Naive thymus-derived CD4-positive, alpha-beta T cell (primary cell): ENCODE measurements at regions of chr12 and their contacts with region 1.

Region 1: DNA sequence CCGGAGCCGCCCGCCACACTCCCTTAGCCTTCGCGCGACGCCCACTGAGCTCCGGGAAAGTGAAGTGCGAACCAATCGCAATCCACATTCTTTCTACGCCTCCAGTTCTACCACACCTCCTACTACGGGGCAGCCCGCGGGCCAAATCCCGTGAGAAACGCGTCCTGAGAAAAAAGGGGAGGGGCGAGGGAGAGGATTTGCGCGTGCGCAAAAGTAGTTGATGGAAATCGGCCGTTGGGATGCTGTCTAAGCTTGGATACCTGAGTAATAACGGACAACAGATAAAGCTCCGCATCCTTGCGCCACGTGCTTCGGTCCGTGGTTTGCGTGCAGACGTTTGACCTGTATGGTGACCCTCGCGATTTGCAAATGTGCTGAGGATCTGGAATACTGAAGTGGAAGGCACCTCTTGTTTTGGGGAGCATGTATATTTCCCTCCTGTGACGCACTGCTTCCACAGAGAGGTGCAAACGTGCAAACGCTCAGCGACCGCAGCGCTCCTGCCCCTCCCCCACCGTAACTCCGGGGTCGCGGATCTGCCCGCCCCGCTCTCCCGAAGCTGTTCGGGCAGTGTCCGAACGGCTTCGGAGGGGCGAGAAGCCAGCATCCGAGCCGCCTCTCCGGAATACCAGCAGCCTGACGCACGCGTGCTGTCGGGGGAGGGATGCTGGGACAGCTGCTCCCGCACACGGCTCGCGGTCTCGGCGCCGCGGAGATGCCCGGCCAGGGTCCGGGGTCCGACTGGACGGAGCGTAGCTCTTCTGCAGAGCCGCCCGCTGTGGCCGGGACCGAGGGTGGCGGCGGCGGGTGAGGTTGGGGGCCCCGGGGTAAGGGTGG is at the starts of genes FAM216A and GPN3:
- DNase-seq: peak; percentile 83 to 98 (median 98)
- ATAC-seq: peak; percentile 94
- H3K4me3 ChIP-seq: peak within 1 kb of the TSS; percentile 95
- H3K4me3 Mint-ChIP-seq: peak within 1 kb of the TSS; percentile 90 to 100 (median 96)
- H3K27ac ChIP-seq: peak within 1 kb of the TSS; percentile 90
- H3K27ac Mint-ChIP-seq: peak within 1 kb of the TSS; percentile 88 to 98 (median 95)
- H3K4me1 ChIP-seq: peaks cover 10 to 19% of the 10 kb centered on the region in 2 donors
- H3K4me1 Mint-ChIP-seq: peaks cover 20 to 68% (median 36%) of the 10 kb centered on the region in 7 donors
- H3K27me3 ChIP-seq: no peaks in the 10 kb centered on the region
- H3K27me3 Mint-ChIP-seq: no peaks in the 10 kb centered on the region
- total RNA-seq, gene FAM216A: 5.3 to 24.1 (median 23.0) TPM
- total RNA-seq, gene GPN3: 5.1 to 19.7 (median 14.6) TPM

Region 2: DNA sequence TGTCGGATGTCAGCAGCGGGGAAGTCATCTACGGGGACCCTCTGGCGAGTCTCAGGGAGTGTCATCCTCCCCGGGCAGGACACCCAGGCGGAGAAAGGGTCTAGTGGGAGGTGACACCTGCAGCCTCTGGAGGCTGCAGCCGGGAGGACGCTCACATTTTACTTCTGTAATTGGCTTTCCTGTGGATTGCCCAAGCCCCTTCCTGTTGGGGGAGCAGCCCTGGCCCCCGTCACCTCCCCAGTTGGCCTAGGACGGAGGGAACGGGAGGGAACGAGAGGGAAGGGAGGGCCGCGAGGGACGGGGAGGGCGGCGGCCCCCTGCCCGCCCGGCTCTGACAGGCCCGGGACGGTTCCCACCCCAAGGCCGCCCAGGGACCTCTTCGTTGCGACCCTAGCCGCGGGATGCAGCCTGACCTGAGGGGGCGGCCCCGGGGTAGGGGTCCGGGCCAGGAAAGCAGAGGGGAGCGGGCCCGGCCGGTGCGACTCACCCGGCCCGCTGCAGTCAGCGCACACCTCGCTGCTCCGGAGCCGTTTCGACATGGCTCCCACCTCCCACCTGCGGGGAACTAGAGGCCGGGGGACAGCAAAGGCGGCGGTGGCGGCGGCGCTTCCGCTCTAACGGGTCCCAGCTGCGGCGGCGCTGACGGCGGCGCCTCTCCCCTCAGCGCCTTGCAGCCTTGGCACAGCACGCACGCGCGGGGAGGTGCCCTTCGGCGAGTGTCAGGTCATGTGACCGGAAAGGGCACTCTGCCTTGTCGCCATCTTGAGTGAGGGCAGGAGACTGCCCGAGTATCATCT is 472.5 kb before region 1 on chr12 and contains the start of gene GIT2:
- CTCF ChIA-PET with region 1: no interaction called
- POLR2A ChIA-PET with region 1: no interaction called
- intact Hi-C with region 1: loop called in 1 of 2 experiments (anchors 5 kb)
- DNase-seq: peak; percentile 88 to 95 (median 93)
- ATAC-seq: peak; percentile 81
- H3K4me3 ChIP-seq: peak within 1 kb of the TSS; percentile 86
- H3K4me3 Mint-ChIP-seq: peak within 1 kb of the TSS; percentile 90 to 100 (median 96)
- H3K27ac ChIP-seq: peak within 1 kb of the TSS; percentile 84
- H3K27ac Mint-ChIP-seq: peak within 1 kb of the TSS; percentile 84 to 100 (median 96)
- H3K4me1 ChIP-seq: peaks cover 22 to 33% of the 10 kb centered on the region in 2 donors
- H3K4me1 Mint-ChIP-seq: peaks cover 42 to 77% (median 66%) of the 10 kb centered on the region in 7 donors
- H3K27me3 ChIP-seq: no peaks in the 10 kb centered on the region
- H3K27me3 Mint-ChIP-seq: no peaks in the 10 kb centered on the region
- total RNA-seq, gene GIT2: 70.3 to 128 (median 109) TPM

Region 3: GRCh38 chr12:110449799-110450497 is 18.5 kb before region 1 on chr12 and contains the start of gene ARPC3:
- CTCF ChIA-PET with region 1: interaction called, 35 read pairs
- POLR2A ChIA-PET with region 1: interaction called, 88 read pairs
- intact Hi-C with region 1: loop called (anchors 1 kb)
- DNase-seq: peak; percentile 86 to 95 (median 94)
- ATAC-seq: peak; percentile 98
- H3K4me3 ChIP-seq: peak within 1 kb of the TSS; percentile 95
- H3K4me3 Mint-ChIP-seq: peak within 1 kb of the TSS; percentile 90 to 100 (median 99)
- H3K27ac ChIP-seq: peak within 1 kb of the TSS; percentile 93
- H3K27ac Mint-ChIP-seq: peak within 1 kb of the TSS; percentile 94 to 100 (median 99)
- H3K4me1 ChIP-seq: peaks cover 20 to 22% of the 10 kb centered on the region in 2 donors
- H3K4me1 Mint-ChIP-seq: peaks cover 31 to 51% (median 44%) of the 10 kb centered on the region in 7 donors
- H3K27me3 ChIP-seq: no peaks in the 10 kb centered on the region
- H3K27me3 Mint-ChIP-seq: peaks cover 0 to 3% (median 0%) of the 10 kb centered on the region in 5 donors
- total RNA-seq, gene ARPC3: 166 to 381 (median 187) TPM

Region 4: DNA sequence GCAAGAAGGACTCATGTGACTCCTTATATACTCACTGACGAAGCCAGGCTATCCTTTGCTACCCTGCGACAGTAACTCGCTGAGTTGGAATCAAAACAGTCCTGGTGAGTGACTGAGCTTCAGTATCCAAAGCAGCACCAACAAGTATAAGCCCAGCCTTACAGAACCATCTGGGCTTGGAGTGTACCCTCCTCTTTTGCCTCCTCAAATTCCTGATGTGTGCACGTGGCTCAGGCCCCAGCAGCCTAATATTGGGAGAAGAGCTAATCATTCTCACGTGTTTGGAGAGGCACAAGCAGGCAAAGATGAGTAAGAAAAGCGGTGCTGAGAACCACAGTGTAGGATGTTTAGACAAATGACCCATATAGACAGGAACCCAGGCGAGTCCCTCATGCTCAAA is 80.2 kb after region 1 on chr12:
- CTCF ChIA-PET with region 1: interaction called, 7 read pairs
- POLR2A ChIA-PET with region 1: interaction called, 3 read pairs
- intact Hi-C with region 1: loop called (anchors 1 to 5 kb)
- DNase-seq: no peak
- ATAC-seq: no peak
- H3K4me3 ChIP-seq: no peak overlapping the region
- H3K4me3 Mint-ChIP-seq: no peak overlapping the region
- H3K27ac ChIP-seq: no peak overlapping the region
- H3K27ac Mint-ChIP-seq: peak overlapping the region in 3 of 9 donors; percentile 28 to 68 (median 55)
- H3K4me1 ChIP-seq: no peaks in the 10 kb centered on the region
- H3K4me1 Mint-ChIP-seq: peaks cover 10 to 55% (median 44%) of the 10 kb centered on the region in 7 donors
- H3K27me3 ChIP-seq: no peaks in the 10 kb centered on the region
- H3K27me3 Mint-ChIP-seq: no peaks in the 10 kb centered on the region

Region 5: DNA sequence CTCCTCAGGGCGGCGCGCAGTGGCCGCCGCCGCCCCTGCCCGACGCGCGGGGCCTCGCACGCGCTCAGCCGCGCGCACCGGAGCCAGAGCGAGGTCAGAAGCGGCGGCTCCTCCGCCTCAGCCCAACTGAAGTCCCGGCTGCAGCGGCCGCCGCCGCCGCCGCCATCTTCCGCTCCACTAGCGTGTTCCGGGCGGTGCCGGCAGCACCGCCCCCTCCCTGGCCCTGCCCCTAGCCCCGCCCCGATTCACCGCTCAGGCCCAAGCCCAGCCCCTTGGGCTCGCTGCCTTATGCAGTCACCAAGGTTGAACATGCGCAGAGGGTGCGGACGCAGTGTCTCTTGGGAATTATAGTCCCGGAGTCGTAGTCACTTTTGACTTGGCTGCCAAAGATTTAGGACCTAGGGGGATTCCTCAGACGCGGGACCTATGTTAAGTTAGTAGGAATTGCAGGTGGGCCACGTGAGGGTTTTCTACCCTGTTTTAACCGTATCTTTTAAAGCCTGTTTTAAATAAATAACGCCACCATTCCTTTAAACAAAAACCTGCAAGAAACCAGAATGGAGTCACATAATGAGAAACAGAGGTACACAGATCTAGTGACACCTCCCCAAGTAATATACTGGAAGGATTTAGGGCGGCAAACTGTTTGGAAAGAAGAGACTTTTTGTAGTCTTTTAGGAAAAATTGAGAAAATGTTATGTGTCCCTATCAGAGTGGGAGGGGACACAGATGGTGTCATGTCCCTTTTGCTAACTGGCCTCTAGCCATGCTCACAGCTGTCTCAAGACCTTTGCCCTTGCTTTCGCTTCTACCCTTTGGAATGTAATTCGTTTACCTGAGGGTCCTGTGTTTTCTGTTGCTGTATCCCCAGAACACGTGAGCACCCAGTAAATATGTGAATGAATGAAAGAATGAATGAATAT is 115.0 kb after region 1 on chr12 and contains the start of gene PPTC7:
- CTCF ChIA-PET with region 1: interaction called, 4 read pairs
- POLR2A ChIA-PET with region 1: interaction called, 13 read pairs
- intact Hi-C with region 1: loop called (anchors 1 kb)
- DNase-seq: peak; percentile 84 to 97 (median 93)
- ATAC-seq: peak; percentile 98
- H3K4me3 ChIP-seq: peak within 1 kb of the TSS; percentile 72
- H3K4me3 Mint-ChIP-seq: peak within 1 kb of the TSS; percentile 91 to 97 (median 95)
- H3K27ac ChIP-seq: peak within 1 kb of the TSS; percentile 97
- H3K27ac Mint-ChIP-seq: peak within 1 kb of the TSS; percentile 93 to 97 (median 95)
- H3K4me1 ChIP-seq: peaks cover 26 to 55% of the 10 kb centered on the region in 2 donors
- H3K4me1 Mint-ChIP-seq: peaks cover 53 to 74% (median 67%) of the 10 kb centered on the region in 7 donors
- H3K27me3 ChIP-seq: no peaks in the 10 kb centered on the region
- H3K27me3 Mint-ChIP-seq: no peaks in the 10 kb centered on the region
- total RNA-seq, gene PPTC7: 36.7 to 43.8 (median 38.8) TPM

Region 6: DNA sequence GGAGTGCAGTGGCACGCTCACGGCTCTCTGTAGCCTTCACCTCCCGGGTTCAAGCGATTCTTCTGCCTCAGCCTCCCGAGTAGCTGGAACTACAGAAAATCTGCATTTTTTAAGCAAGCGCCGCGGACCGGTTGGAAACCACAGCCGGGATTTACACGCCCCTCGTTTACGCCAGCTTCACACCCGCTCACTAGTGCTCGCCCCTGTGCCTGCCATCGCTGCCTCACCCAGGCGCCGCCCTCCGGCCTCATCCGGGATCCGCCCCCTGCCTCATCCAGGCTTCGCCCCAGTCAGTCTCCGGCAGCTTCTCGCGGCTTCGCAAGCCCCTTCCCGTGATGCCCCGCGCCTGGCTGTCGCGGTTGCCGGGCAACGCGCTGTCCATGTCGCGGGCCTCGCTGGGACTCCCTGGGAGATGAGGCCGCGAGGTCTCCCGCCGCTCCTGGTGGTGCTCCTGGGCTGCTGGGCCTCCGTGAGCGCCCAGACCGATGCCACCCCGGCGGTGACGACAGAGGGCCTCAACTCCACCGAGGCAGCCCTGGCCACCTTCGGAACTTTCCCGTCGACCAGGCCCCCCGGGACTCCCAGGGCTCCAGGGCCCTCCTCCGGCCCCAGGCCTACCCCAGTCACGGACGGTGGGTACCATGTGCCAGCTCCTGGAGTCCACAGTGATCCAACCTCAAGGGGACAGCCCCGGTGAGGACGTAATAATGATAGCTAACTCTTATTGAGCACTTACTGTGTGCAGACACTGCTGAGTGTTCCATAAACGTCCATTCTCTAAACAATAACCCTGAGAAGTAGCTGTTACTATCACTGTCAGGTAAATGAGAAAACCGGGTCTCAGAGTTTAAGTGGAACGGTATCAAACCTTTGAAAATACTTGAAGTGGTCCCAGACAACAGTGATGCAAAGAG is 145.6 kb after region 1 on chr12 and contains the start of gene TCTN1:
- CTCF ChIA-PET with region 1: no interaction called
- POLR2A ChIA-PET with region 1: interaction called, 6 read pairs
- intact Hi-C with region 1: loop called in 1 of 2 experiments (anchors 1 kb)
- DNase-seq: peak; percentile 88 to 98 (median 93)
- ATAC-seq: peak; percentile 100
- H3K4me3 ChIP-seq: peak within 1 kb of the TSS; percentile 75
- H3K4me3 Mint-ChIP-seq: peak within 1 kb of the TSS; percentile 81 to 89 (median 88)
- H3K27ac ChIP-seq: peak within 1 kb of the TSS; percentile 87
- H3K27ac Mint-ChIP-seq: peak within 1 kb of the TSS; percentile 31 to 92 (median 87)
- H3K4me1 ChIP-seq: peaks cover 4 to 6% of the 10 kb centered on the region in 2 donors
- H3K4me1 Mint-ChIP-seq: peaks cover 0 to 10% (median 4%) of the 10 kb centered on the region in 7 donors
- H3K27me3 ChIP-seq: no peaks in the 10 kb centered on the region
- H3K27me3 Mint-ChIP-seq: no peaks in the 10 kb centered on the region
- total RNA-seq, gene TCTN1: 5.2 to 13.0 (median 10.2) TPM

Region 7: GRCh38 chr12:110742718-110743570 is 274.5 kb after region 1 on chr12 and contains the start of gene PPP1CC:
- CTCF ChIA-PET with region 1: interaction called, 7 read pairs
- POLR2A ChIA-PET with region 1: interaction called, 4 read pairs
- intact Hi-C with region 1: loop called (anchors 1 to 2 kb)
- DNase-seq: peak; percentile 81 to 93 (median 91)
- ATAC-seq: peak; percentile 98
- H3K4me3 ChIP-seq: peak within 1 kb of the TSS; percentile 68
- H3K4me3 Mint-ChIP-seq: peak within 1 kb of the TSS; percentile 89 to 100 (median 99)
- H3K27ac ChIP-seq: peak within 1 kb of the TSS; percentile 79
- H3K27ac Mint-ChIP-seq: peak within 1 kb of the TSS; percentile 94 to 99 (median 97)
- H3K4me1 ChIP-seq: peaks cover 18 to 21% of the 10 kb centered on the region in 2 donors
- H3K4me1 Mint-ChIP-seq: peaks cover 34 to 52% (median 46%) of the 10 kb centered on the region in 7 donors
- H3K27me3 ChIP-seq: no peaks in the 10 kb centered on the region
- H3K27me3 Mint-ChIP-seq: no peaks in the 10 kb centered on the region
- total RNA-seq, gene PPP1CC: 108 to 218 (median 145) TPM